H1 (cell line): ENCODE measurements at regions of chr4 and their contacts with region 1.

Region 1: DNA sequence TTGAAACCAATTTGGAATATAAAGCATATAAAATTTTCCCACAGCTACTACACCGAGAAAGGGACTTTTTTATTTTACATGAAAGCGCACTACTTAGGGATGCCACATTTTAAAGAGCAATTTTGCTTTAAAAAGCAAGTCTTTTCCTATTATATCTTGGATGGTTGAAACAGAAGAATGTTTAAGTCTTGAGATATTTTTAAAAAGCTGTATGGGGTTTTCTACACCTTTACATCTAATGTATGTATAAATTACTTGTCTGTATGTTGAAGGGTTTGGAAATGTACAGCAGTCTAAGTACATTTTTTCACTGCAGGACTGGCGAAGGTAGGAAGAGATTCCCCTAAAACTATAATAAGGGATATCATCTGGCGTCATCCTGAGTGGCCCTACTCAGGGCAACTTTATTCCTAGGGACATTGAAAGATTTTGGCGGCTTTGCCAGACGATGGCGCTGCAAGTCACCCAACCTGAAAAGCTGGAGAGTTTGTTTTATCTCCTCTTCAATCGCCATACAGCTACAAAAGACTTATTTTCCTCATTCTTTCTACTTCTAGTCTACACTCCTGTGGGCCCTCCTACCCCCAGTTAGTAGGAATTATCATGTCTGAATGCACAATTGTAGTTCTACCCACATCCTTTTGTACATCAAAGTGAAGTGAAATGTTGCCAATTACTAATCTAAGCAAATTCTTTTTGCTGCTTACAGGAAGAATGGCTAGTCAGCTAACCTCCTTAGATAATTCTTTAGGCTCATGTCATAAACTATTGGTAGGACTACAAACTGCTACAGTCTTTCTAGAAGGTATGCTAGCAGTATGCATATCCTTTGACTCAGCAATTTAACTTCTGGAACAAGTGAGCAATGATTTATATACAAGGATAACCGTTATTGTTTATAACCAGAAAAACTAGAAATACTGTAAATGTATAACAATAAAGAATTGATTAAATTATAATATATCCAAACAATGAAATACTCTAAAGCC is 782 bp upstream of the NEK1 start:
- DNase-seq: peak; percentile 41 to 81
- H3K4me3 ChIP-seq: peak overlapping the region; percentile 44 to 93 (median 81)
- H3K27ac ChIP-seq: no peak overlapping the region
- H3K4me1 ChIP-seq: no peaks in the 10 kb centered on the region; a peak in 1 of 7 replicates
- H3K27me3 ChIP-seq: no peaks in the 10 kb centered on the region
- CTCF ChIP-seq: peak; percentile 48 to 77 (median 69)
- EP300 ChIP-seq: no peak
- POLR2A ChIP-seq: no peak; a peak in 1 of 3 replicates
- RAD21 ChIP-seq: peak; percentile 77

Region 2: GRCh38 chr4:169723207-169723965 is 110.2 kb after region 1 on chr4:
- CTCF ChIA-PET with region 1: interaction called, 19 read pairs
- POLR2A ChIA-PET with region 1: no interaction called
- DNase-seq: no peak
- H3K4me3 ChIP-seq: no peak overlapping the region
- H3K27ac ChIP-seq: no peak overlapping the region
- H3K4me1 ChIP-seq: no peaks in the 10 kb centered on the region
- H3K27me3 ChIP-seq: no peaks in the 10 kb centered on the region
- CTCF ChIP-seq: peak in 2 of 3 experiments; percentile 44 to 54; a peak in 2 of 4 replicates
- EP300 ChIP-seq: no peak
- POLR2A ChIP-seq: no peak
- RAD21 ChIP-seq: peak; percentile 63 to 70

Region 3: GRCh38 chr4:170047771-170048354 is 434.7 kb after region 1 on chr4:
- CTCF ChIA-PET with region 1: interaction called, 11 read pairs
- POLR2A ChIA-PET with region 1: no interaction called
- DNase-seq: no peak
- H3K4me3 ChIP-seq: no peak overlapping the region
- H3K27ac ChIP-seq: no peak overlapping the region
- H3K4me1 ChIP-seq: no peaks in the 10 kb centered on the region
- H3K27me3 ChIP-seq: no peaks in the 10 kb centered on the region
- CTCF ChIP-seq: peak in 2 of 3 experiments; percentile 52 to 62; a peak in 2 of 4 replicates
- EP300 ChIP-seq: no peak
- POLR2A ChIP-seq: no peak
- RAD21 ChIP-seq: peak; percentile 78